Breast epithelium (tissue), 4 donors: ENCODE measurements at regions of chr2 and their contacts with region 1.

Region 1: DNA sequence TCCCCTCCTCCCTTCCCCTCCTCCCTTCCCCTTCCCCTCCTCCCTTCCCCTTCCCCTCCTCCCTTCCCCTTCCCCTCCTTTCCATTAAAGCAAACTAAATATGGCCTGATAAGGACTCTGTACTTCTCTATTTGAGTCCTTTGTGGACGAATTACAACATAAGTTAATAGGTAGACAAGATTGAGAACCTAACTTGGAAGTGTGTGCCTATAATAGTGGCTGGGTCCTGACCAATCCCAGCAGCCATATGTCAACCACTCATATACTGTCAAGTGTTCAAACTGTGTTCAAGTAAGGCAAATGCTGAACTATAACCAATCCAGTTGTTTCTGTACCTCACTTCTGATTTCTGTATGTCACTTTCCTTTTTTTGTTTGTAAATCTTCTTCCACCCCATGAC is 97.1 kb upstream of the RBMS1 start:
- DNase-seq: no peak
- H3K4me3 ChIP-seq: no peak overlapping the region
- H3K27ac ChIP-seq: no peak overlapping the region
- H3K4me1 ChIP-seq: no peaks in the 10 kb centered on the region
- H3K27me3 ChIP-seq: no peaks in the 10 kb centered on the region
- CTCF ChIP-seq: no peak
- POLR2A ChIP-seq: no peak

Region 2: GRCh38 chr2:160429248-160430000 is 161.2 kb before region 1 on chr2:
- intact Hi-C with region 1: no loop called
- DNase-seq: no peak
- H3K4me3 ChIP-seq: no peak overlapping the region
- H3K27ac ChIP-seq: peak overlapping the region; percentile 20 to 35
- H3K4me1 ChIP-seq: peaks cover 0 to 5% of the 10 kb centered on the region in 2 donors
- H3K27me3 ChIP-seq: no peaks in the 10 kb centered on the region
- CTCF ChIP-seq: peak; percentile 22 to 62 (median 60)
- POLR2A ChIP-seq: no peak

Region 3: DNA sequence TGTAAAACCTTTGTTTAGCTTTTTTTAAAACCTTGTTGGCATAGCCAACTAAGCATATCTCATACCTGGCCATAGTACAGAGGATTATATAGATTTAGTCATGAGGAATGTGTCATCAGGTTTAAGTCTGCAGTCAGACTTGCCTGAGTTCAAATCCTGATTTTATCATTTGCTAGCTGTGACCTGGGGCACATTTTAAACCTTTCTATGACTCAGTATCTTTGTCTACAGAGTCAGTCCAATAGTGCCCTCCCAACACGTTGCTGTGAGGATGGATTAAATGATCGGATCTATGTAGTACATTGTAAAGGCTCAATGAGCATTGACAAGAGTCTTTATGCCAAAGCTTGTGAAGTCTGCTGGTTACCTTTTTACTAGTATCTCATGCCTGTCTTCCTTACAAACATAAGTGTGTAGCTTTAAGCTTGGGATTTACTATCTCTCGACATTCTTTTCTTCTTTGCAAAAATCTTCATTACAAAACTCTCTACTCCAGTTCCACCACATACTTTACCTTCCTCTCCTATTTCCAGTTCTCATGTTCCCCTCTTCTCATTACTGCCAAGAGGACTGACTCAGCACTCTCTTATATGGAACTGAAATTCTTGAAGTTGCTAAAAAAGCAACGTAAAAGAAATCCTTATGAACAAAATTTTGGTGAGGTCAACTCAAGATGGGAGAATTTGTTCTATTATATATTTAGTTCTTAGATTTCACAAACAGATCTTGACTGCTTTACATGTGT is 28.9 kb before region 1 on chr2:
- intact Hi-C with region 1: loop called (anchors 2 kb)
- DNase-seq: no peak
- H3K4me3 ChIP-seq: no peak overlapping the region
- H3K27ac ChIP-seq: no peak overlapping the region
- H3K4me1 ChIP-seq: no peaks in the 10 kb centered on the region
- H3K27me3 ChIP-seq: no peaks in the 10 kb centered on the region
- CTCF ChIP-seq: no peak
- POLR2A ChIP-seq: no peak

Region 4: GRCh38 chr2:160621748-160622147 is 31.1 kb after region 1 on chr2:
- intact Hi-C with region 1: loop called (anchors 2 kb)
- DNase-seq: no peak
- H3K4me3 ChIP-seq: no peak overlapping the region
- H3K27ac ChIP-seq: no peak overlapping the region
- H3K4me1 ChIP-seq: no peaks in the 10 kb centered on the region
- H3K27me3 ChIP-seq: no peaks in the 10 kb centered on the region
- CTCF ChIP-seq: no peak
- POLR2A ChIP-seq: no peak

Region 5: GRCh38 chr2:162007447-162008040 is 1416.9 kb after region 1 on chr2:
- intact Hi-C with region 1: no loop called
- DNase-seq: no peak
- H3K4me3 ChIP-seq: no peak overlapping the region
- H3K27ac ChIP-seq: no peak overlapping the region
- H3K4me1 ChIP-seq: no peaks in the 10 kb centered on the region
- H3K27me3 ChIP-seq: no peaks in the 10 kb centered on the region
- CTCF ChIP-seq: peak in 2 of 3 donors; percentile 59 to 61
- POLR2A ChIP-seq: no peak